AG04449 (cell line): ENCODE measurements at regions of chr3 and their contacts with region 1.

Region 1: GRCh38 chr3:39428745-39429201 is 22.3 kb downstream of the RPSA start:
- DNase-seq: no peak
- H3K4me3 ChIP-seq: no peak overlapping the region
- CTCF ChIP-seq: no peak

Region 2: GRCh38 chr3:39146984-39147591 is 281.7 kb before region 1 on chr3:
- CTCF ChIA-PET with region 1: no interaction called
- POLR2A ChIA-PET with region 1: no interaction called
- DNase-seq: peak; percentile 98
- H3K4me3 ChIP-seq: peak overlapping the region; percentile 32
- CTCF ChIP-seq: no peak

Region 3: GRCh38 chr3:39398700-39399099 is 30.1 kb before region 1 on chr3:
- CTCF ChIA-PET with region 1: no interaction called
- POLR2A ChIA-PET with region 1: no interaction called
- DNase-seq: no peak
- H3K4me3 ChIP-seq: no peak overlapping the region
- CTCF ChIP-seq: no peak

Region 4: DNA sequence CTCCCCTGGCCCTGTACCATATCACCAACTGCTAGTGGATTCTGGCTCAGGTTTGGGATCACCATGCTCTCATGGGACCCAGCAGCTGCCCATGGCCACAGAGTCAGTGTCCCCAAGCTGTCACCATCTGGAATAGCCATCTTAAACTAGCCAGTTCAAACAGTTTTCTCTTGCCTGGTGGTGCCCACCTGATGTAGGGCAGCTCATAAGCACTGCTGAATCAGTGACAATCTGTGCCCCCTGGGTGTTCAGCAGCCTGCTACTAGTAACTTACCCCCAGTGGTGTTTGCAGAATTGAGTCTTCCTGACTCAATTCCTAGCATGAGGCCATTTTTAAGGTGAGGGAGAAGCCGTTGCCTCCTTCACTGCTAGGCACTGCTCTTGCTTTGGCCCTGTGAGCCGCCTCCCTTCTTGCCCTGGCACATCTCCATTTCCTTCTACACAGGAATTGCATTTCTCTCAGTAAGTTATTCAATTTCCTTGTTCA is 14.3 kb before region 1 on chr3:
- CTCF ChIA-PET with region 1: interaction called, 13 read pairs
- POLR2A ChIA-PET with region 1: no interaction called
- DNase-seq: no peak
- H3K4me3 ChIP-seq: no peak overlapping the region
- CTCF ChIP-seq: no peak